MCF 10A (cell line): ENCODE measurements at regions of chr3 and their contacts with region 1.

Region 1: DNA sequence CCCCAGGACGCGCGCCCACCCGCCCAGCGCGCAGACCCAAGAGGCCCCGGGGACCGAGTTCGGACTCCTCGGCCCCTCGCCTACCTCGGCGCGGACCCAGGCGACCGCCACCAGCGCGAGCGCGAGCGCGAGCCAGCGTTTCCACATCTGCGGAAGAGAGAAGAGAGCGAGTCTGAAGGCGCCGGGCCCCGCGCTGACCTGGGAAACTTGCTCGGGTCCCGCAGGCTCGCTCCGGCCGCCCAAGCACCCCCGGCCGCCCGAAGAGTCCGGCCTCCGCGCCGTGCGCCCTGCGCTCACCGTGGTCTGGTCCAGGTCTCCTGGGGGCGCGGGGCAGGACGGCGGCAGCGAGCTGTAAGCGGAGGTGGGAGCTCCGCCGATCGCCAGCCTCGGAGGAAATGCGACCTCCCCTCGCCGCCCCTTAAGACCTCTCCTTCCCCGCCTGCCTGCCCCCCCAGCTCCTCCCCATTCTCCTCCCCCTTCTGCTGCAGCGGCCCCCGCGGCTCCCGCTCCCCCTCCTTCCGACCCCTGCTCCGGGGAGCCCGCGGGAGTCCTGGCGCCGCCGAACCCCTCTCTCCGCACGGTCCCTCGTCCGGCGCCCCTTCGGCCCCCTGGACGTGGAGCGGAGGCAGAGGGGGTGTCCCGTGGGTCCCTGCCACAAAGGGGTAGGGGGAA is at the start of gene FSTL1:
- DNase-seq: peak; percentile 31
- H3K4me3 Mint-ChIP-seq: peak within 1 kb of the TSS; percentile 86
- H3K27ac Mint-ChIP-seq: peak within 1 kb of the TSS; percentile 90
- H3K4me1 Mint-ChIP-seq: peaks cover 15% of the 10 kb centered on the region
- H3K27me3 Mint-ChIP-seq: no peaks in the 10 kb centered on the region
- CTCF ChIP-seq: no peak
- total RNA-seq, gene FSTL1: 49.4 and 56.4 TPM in 2 replicates

Region 2: DNA sequence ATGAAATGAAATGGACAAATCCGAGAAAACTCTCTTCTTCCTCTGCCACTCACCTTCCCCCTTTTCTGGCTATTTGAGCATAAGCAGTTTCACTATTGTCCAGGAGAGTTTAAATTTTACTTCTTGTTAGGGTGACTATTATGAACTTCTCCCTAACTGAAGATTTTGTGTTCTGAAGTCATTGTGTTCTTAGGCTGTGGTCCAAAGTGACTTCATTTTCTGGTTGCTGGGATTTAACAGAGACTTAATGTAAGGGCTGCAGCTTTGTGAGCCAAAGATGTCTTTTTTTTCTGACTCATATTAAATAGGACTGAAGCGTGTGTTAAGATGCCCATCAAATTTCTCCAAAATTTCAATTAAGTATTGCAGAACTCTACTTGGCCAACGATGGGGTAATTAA is 46.6 kb after region 1 on chr3:
- CTCF ChIA-PET with region 1: no interaction called
- POLR2A ChIA-PET with region 1: interaction called, 3 read pairs
- intact Hi-C with region 1: loop called (anchors 2 kb)
- DNase-seq: peak; percentile 84
- H3K4me3 Mint-ChIP-seq: peak overlapping the region; percentile 43
- H3K27ac Mint-ChIP-seq: peak overlapping the region; percentile 78
- H3K4me1 Mint-ChIP-seq: peaks cover 25% of the 10 kb centered on the region
- H3K27me3 Mint-ChIP-seq: no peaks in the 10 kb centered on the region
- CTCF ChIP-seq: no peak

Region 3: DNA sequence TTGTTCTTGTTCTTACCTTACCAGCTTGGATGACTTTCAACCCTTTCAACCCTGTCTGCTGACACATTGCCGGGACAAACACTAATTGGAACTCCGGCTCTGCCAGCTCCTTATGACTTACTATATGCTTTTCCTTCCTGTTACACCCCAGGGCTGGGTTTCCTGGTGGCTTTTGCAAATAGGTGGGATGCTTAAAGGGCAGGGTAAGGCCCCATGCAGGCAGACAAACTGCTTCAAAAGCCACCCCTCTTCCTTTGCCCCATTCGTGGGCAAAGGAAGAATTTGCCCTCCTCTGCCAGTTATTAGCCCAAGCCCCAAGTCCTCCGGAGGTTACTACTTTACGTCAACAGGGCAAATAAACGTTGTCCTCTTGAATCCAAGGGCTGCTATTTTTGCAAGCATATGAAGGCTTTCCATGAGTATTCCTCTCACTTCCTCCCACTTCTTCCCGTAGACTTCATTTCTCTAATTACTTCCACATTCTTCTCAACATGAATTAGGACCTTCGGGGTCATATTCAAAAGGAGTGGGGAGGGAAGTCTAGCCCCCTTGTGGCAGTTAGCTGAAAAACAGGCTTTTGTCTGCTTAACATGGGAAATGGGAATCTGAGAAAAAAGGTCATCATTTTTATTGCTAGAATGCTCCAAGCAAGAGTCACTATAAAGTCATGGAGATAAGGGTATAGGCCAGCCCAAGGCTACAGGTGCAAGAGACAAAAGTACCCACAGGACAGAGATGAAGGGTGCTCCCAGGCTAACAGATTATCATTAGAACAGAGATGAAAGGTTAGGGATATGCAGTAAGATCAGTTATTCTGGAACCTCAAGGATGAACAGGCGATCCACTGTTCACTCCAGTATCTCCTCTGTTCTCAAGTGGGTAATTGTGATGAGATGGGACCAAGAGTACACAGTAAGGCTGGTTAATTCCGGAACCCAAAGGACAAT is 56.4 kb after region 1 on chr3:
- CTCF ChIA-PET with region 1: no interaction called
- POLR2A ChIA-PET with region 1: no interaction called
- intact Hi-C with region 1: loop called (anchors 1 kb)
- DNase-seq: peak; percentile 59
- H3K4me3 Mint-ChIP-seq: no peak overlapping the region
- H3K27ac Mint-ChIP-seq: no peak overlapping the region
- H3K4me1 Mint-ChIP-seq: peaks cover 17% of the 10 kb centered on the region
- H3K27me3 Mint-ChIP-seq: no peaks in the 10 kb centered on the region
- CTCF ChIP-seq: peak; percentile 61

Region 4: DNA sequence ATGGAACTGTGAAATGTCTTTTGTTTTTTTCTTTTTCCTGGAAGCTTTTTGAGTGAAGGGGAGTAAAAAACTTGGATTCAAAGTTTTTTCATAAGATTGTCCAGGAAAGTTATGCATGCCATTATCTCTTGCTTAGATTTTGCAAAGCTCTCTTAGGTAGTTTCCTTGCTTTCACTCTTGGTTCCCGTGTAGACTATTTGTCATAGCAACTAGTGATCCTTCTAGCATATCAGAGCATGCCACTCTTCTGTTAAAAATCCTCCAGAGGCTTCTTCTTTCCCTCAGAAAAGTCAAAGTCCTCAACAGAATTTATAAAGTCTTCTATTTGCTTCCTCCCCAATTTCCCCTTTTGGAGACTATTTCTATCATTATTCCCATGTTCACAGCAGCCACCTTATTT is 312.9 kb after region 1 on chr3:
- CTCF ChIA-PET with region 1: no interaction called
- POLR2A ChIA-PET with region 1: no interaction called
- intact Hi-C with region 1: no loop called
- DNase-seq: no peak
- H3K4me3 Mint-ChIP-seq: no peak overlapping the region
- H3K27ac Mint-ChIP-seq: no peak overlapping the region
- H3K4me1 Mint-ChIP-seq: peaks cover 18% of the 10 kb centered on the region
- H3K27me3 Mint-ChIP-seq: no peaks in the 10 kb centered on the region
- CTCF ChIP-seq: no peak